HepG2 (cell line): ENCODE measurements at regions of chr2 and their contacts with region 1.

Region 1: DNA sequence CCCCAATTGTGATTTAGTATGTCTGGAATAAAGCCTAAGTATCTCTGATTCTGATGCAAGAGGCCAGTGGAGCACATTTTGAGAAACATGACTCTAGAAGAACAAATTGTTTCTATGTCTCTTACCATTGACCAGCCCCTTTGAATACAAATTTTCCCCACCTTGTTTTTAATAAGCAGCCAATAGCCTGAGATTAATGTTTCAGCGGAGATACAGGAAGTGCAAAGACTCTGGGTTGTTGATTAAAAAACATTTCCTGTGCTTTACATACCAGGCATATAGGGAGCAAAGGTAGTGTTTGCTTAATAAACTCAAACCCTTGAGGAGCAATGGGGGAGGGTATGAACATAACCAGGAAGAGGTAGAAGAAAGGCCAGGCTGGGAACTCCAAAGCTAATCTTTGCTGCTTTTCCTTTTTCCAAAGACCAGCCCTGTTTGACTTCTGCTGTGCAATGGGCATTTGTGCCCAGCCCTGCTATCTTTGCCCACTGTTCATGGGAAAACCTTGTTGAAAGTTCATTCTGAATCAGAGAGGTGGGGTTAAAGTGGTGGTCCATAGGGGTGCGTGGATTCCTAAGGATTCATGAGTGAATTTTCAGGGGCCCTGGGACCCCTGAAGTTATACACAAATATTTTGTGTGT is 29.3 kb downstream of the UPP2 start:
- DNase-seq: peak; percentile 96
- ATAC-seq: peak; percentile 56
- H3K4me3 ChIP-seq: peak overlapping the region in 2 of 3 experiments; percentile 35 to 56; a peak in 5 of 6 replicates
- H3K27ac ChIP-seq: peak overlapping the region; percentile 98
- H3K4me1 ChIP-seq: peaks cover 98% of the 10 kb centered on the region
- H3K27me3 ChIP-seq: no peaks in the 10 kb centered on the region
- CTCF ChIP-seq: no peak
- EP300 ChIP-seq: peak; percentile 20 to 100; a peak in 3 of 4 replicates
- POLR2A ChIP-seq: no peak; a peak in 1 of 4 replicates
- RAD21 ChIP-seq: no peak; the same call in 1 of the 2 replicates

Region 2: DNA sequence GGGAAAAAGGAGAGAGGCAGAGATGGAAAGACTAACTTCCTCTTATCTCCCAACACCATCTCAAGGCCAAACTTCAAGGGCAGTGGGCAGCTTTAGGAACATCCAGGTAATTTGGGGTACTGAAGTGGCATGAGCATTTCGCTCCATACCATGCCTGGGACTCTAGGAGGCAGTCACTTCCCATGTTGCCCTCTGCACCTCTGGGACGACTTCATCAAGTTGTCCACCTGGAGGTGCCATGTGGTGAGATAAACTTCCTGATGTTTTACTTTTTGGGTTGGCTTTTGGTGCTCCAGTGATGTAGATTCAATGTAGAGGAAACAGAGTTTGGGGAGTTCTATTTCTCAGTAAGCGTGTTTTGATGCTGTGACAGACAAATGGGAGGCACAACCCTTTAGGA is 85.6 kb before region 1 on chr2:
- CTCF ChIA-PET with region 1: no interaction called
- POLR2A ChIA-PET with region 1: no interaction called
- in situ Hi-C with region 1: no loop called
- intact Hi-C with region 1: loop called (anchors 5 kb)
- DNase-seq: peak; percentile 68
- ATAC-seq: peak; percentile 99
- H3K4me3 ChIP-seq: no peak overlapping the region
- H3K27ac ChIP-seq: no peak overlapping the region
- H3K4me1 ChIP-seq: peaks cover 19% of the 10 kb centered on the region
- H3K27me3 ChIP-seq: peaks cover 0 to 16% of the 10 kb centered on the region in 2 experiments; a peak in 2 of 5 replicates
- CTCF ChIP-seq: peak; percentile 90
- EP300 ChIP-seq: no peak
- POLR2A ChIP-seq: no peak
- RAD21 ChIP-seq: peak; percentile 91

Region 3: GRCh38 chr2:158120664-158121641 is 10.0 kb before region 1 on chr2:
- CTCF ChIA-PET with region 1: no interaction called
- POLR2A ChIA-PET with region 1: interaction called, 11 read pairs
- in situ Hi-C with region 1: no loop called
- intact Hi-C with region 1: no loop called
- DNase-seq: no peak
- ATAC-seq: no peak
- H3K4me3 ChIP-seq: no peak overlapping the region
- H3K27ac ChIP-seq: no peak overlapping the region
- H3K4me1 ChIP-seq: peaks cover 46% of the 10 kb centered on the region
- H3K27me3 ChIP-seq: no peaks in the 10 kb centered on the region
- CTCF ChIP-seq: no peak
- EP300 ChIP-seq: no peak
- POLR2A ChIP-seq: no peak
- RAD21 ChIP-seq: no peak

Region 4: DNA sequence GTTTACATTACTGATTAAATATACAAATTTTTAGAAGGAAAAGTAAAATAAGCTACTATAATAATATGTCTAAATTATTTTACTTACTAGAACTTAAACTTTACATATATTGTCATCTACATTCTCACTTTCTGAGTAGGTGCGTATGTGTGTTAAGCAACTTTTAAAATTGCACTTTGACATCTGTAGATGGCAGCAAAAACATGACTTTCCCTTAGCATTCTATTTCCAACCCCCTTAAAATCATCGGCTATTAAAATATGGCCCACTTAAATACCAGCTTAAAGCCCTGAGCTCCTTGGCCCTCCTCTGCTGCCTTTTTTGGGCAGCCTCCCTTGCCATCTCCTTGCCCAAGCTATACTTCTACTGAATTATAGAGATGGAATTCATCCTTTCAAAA is 48.7 kb after region 1 on chr2:
- CTCF ChIA-PET with region 1: no interaction called
- POLR2A ChIA-PET with region 1: interaction called, 11 read pairs
- in situ Hi-C with region 1: no loop called
- intact Hi-C with region 1: no loop called
- DNase-seq: peak; percentile 35
- ATAC-seq: peak; percentile 82
- H3K4me3 ChIP-seq: no peak overlapping the region
- H3K27ac ChIP-seq: no peak overlapping the region
- H3K4me1 ChIP-seq: peaks cover 51% of the 10 kb centered on the region
- H3K27me3 ChIP-seq: no peaks in the 10 kb centered on the region
- CTCF ChIP-seq: peak; percentile 81
- EP300 ChIP-seq: no peak
- POLR2A ChIP-seq: no peak
- RAD21 ChIP-seq: peak; percentile 78